Activated CD4-positive, alpha-beta memory T cell treated with anti-CD3 and anti-CD28 coated beads, Interleukin-2, amount 10 ng/mL, durations not matched to agents 7 days and 5 days (primary cell): ENCODE measurements at regions of chr6 and their contacts with region 1.

Region 1: DNA sequence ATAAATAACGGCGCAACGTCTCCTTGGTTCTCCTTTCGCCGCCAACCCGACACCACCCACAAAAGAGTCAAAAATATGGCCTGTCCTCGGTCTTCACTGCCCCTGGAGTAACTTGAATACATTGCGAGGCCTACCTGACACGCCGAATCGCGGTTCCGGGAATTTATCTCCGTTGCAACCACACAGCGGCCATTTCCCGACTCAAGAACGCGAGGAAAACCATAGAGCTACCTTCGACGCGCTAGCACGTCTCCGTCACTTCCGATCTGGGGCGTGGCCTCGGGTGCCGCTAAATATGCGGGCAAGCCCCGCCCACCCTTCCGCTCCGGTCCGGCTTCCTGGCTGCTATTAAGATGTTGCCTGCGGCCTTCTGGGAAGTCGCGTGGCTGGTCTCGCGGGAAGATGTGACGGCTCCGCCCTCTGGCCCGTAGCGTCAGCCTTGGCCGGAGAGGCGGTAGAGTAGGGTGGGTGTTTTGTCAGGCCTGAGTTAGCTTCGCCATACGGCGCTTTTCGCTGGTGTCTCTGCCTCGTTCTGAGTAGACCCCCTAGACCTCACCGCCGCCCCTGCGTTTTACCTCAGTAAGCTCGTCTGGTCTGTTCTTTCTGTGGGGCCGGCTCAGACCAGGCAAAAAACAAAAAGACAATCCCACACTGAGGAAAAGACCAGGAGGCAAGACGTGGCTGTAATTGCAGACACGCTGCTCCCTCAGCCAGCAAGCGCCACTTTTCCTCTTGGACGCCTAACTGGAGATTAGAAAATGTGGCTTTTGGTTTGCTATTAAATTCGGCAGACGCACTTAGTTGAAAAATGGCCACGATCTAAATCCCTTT is at the start of gene BCLAF1:
- DNase-seq: peak; percentile 100
- H3K4me3 Mint-ChIP-seq: peak within 1 kb of the TSS; percentile 94
- H3K27ac Mint-ChIP-seq: peak within 1 kb of the TSS; percentile 100
- H3K4me1 Mint-ChIP-seq: peaks cover 46% of the 10 kb centered on the region
- H3K27me3 Mint-ChIP-seq: no peaks in the 10 kb centered on the region
- total RNA-seq, gene BCLAF1: 128 to 132 TPM

Region 2: GRCh38 chr6:135054569-135055498 is 1235.0 kb before region 1 on chr6 and contains the start of gene HBS1L:
- CTCF ChIA-PET with region 1: no interaction called
- POLR2A ChIA-PET with region 1: interaction called, 11 read pairs
- DNase-seq: peak; percentile 97
- H3K4me3 Mint-ChIP-seq: peak within 1 kb of the TSS; percentile 90
- H3K27ac Mint-ChIP-seq: peak within 1 kb of the TSS; percentile 94
- H3K4me1 Mint-ChIP-seq: peaks cover 40% of the 10 kb centered on the region
- H3K27me3 Mint-ChIP-seq: no peaks in the 10 kb centered on the region
- total RNA-seq, gene HBS1L: 90.3 to 91.6 TPM

Region 3: DNA sequence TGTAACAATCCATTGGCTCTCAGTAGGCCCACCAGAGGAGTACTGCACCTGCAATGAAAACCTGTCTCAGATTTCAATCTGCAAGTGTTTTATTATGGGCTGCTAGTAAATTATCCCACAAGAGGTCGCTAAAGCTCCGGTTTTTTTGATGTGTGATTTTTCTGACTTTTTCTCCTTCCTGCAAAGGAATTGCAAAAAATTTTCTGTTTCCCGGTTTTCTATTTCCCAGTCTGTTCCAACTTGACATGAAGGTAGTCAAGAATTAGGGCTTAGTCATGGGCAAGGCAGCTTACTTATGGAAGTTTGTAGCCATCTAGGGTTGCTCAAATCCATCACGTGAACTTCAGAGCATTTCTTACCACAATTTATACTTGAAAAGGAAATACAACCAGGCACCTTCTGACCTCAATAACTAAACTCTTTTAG is 753.8 kb before region 1 on chr6:
- CTCF ChIA-PET with region 1: no interaction called
- POLR2A ChIA-PET with region 1: interaction called, 10 read pairs
- DNase-seq: no peak
- H3K4me3 Mint-ChIP-seq: no peak overlapping the region
- H3K27ac Mint-ChIP-seq: peak overlapping the region; percentile 67
- H3K4me1 Mint-ChIP-seq: peaks cover 49% of the 10 kb centered on the region
- H3K27me3 Mint-ChIP-seq: no peaks in the 10 kb centered on the region

Region 4: DNA sequence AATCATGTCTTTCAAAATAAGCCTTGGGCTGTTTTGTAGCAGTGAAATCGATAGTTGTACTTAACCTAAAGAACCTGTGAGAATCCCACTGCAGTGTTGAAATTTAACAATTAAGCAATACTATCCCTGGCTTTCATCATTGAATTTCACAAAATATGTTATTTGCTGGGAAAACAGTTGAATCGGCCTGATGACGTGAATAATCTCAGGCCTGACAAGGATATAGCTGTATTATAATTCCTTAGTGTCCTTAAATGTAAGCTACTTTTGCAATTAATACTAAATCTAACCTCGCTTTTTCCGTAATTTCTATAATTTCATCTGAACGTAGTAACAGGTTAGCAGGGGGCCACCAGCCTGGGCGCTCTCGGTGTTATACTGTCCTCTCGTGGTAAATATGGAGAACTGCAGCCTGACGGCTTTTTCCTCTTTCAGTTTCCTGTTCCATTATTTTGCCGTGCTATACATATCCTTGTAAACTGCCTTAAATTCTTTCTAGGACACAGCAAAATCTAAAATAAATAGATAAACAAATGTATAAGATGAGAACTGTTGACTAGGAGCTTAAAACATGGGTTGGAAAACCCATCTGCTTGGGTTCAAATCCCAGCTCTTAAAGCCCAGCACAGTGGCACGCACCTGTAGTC is 63.6 kb before region 1 on chr6:
- CTCF ChIA-PET with region 1: interaction called, 6 read pairs
- POLR2A ChIA-PET with region 1: interaction called, 11 read pairs
- DNase-seq: peak; percentile 59
- H3K4me3 Mint-ChIP-seq: no peak overlapping the region
- H3K27ac Mint-ChIP-seq: peak overlapping the region; percentile 7
- H3K4me1 Mint-ChIP-seq: peaks cover 8% of the 10 kb centered on the region
- H3K27me3 Mint-ChIP-seq: peaks cover 1% of the 10 kb centered on the region

Region 5: DNA sequence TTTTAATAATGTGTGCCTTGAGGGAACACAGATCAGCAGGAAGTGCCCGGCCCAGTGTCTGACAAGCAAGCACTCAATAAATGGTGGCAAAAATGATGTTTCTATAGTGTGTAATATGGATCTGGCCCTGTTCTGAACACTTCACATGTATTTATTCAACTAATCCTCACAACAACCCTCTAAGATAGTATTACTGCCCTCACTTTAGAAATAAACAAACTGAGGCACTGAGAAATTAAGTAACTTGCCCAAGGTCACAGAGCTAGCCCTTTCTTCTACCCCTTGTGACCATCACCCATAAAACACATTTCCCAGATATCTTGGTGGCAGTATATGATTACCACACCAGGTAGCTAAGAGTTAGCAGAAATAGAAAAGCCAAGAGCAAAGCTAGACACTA is 26.9 kb before region 1 on chr6:
- CTCF ChIA-PET with region 1: interaction called, 4 read pairs
- POLR2A ChIA-PET with region 1: interaction called, 15 read pairs
- DNase-seq: no peak
- H3K4me3 Mint-ChIP-seq: no peak overlapping the region
- H3K27ac Mint-ChIP-seq: no peak overlapping the region
- H3K4me1 Mint-ChIP-seq: peaks cover 24% of the 10 kb centered on the region
- H3K27me3 Mint-ChIP-seq: no peaks in the 10 kb centered on the region

Region 6: GRCh38 chr6:136306466-136306865 is 16.7 kb after region 1 on chr6:
- CTCF ChIA-PET with region 1: interaction called, 4 read pairs
- POLR2A ChIA-PET with region 1: interaction called, 13 read pairs
- DNase-seq: no peak
- H3K4me3 Mint-ChIP-seq: no peak overlapping the region
- H3K27ac Mint-ChIP-seq: no peak overlapping the region
- H3K4me1 Mint-ChIP-seq: no peaks in the 10 kb centered on the region
- H3K27me3 Mint-ChIP-seq: peaks cover 3% of the 10 kb centered on the region

Region 7: GRCh38 chr6:136347847-136348246 is 58.1 kb after region 1 on chr6:
- CTCF ChIA-PET with region 1: no interaction called
- POLR2A ChIA-PET with region 1: no interaction called
- DNase-seq: no peak
- H3K4me3 Mint-ChIP-seq: no peak overlapping the region
- H3K27ac Mint-ChIP-seq: no peak overlapping the region
- H3K4me1 Mint-ChIP-seq: no peaks in the 10 kb centered on the region
- H3K27me3 Mint-ChIP-seq: peaks cover 2% of the 10 kb centered on the region

Region 8: GRCh38 chr6:136593748-136594490 is 304.1 kb after region 1 on chr6:
- CTCF ChIA-PET with region 1: no interaction called
- POLR2A ChIA-PET with region 1: interaction called, 10 read pairs
- DNase-seq: peak; percentile 68
- H3K4me3 Mint-ChIP-seq: peak overlapping the region; percentile 63
- H3K27ac Mint-ChIP-seq: peak overlapping the region; percentile 88
- H3K4me1 Mint-ChIP-seq: peaks cover 30% of the 10 kb centered on the region
- H3K27me3 Mint-ChIP-seq: no peaks in the 10 kb centered on the region